ENCODE measurements at regions of chr22 and their contacts with region 1.

Region 1: DNA sequence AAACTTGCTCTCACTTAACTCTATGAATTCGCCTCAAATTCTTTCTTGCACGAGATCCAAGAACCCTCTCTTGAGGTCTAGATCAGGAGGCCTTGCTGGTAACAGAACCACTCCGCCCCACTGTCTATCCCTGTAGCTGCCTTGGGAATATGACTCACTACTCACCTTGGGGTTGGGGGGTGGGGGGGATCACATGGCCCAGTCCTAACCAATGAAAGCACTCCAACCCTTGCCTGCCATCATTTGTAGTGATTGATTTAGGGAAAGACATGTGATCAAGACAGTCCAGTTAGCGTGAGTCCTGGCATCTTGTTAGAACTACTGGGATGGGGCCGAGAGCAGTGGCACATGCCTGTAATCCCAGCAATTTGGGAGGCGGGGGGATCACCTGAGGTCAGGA is 4.8 kb upstream of the MRTFA start:
- DNase-seq: no peak
- H3K4me3 ChIP-seq: no peak overlapping the region
- H3K27ac ChIP-seq: no peak overlapping the region
- H3K4me1 ChIP-seq: peaks cover 0 to 22% (median 15%) of the 10 kb centered on the region in 6 donors
- H3K27me3 ChIP-seq: no peaks in the 10 kb centered on the region
- CTCF ChIP-seq: no peak
- POLR2A ChIP-seq: no peak

Region 2: GRCh38 chr22:40400159-40400558 is 241.1 kb before region 1 on chr22:
- intact Hi-C with region 1: no loop called
- DNase-seq: peak; percentile 93
- H3K4me3 ChIP-seq: peak overlapping the region in 1 of 8 donors; percentile 43
- H3K27ac ChIP-seq: peak overlapping the region; percentile 8 to 93 (median 86)
- H3K4me1 ChIP-seq: peaks cover 52 to 93% (median 77%) of the 10 kb centered on the region in 6 donors
- H3K27me3 ChIP-seq: no peaks in the 10 kb centered on the region
- CTCF ChIP-seq: no peak
- POLR2A ChIP-seq: no peak

Region 3: GRCh38 chr22:40436505-40437451 is 204.5 kb before region 1 on chr22:
- intact Hi-C with region 1: loop called (anchors 5 kb)
- DNase-seq: no peak
- H3K4me3 ChIP-seq: peak overlapping the region in 4 of 8 donors; percentile 11 to 45 (median 20)
- H3K27ac ChIP-seq: peak overlapping the region; percentile 58 to 81 (median 76)
- H3K4me1 ChIP-seq: peaks cover 37 to 100% (median 88%) of the 10 kb centered on the region in 6 donors
- H3K27me3 ChIP-seq: no peaks in the 10 kb centered on the region
- CTCF ChIP-seq: peak; percentile 26 to 80 (median 66)
- POLR2A ChIP-seq: no peak

Region 4: DNA sequence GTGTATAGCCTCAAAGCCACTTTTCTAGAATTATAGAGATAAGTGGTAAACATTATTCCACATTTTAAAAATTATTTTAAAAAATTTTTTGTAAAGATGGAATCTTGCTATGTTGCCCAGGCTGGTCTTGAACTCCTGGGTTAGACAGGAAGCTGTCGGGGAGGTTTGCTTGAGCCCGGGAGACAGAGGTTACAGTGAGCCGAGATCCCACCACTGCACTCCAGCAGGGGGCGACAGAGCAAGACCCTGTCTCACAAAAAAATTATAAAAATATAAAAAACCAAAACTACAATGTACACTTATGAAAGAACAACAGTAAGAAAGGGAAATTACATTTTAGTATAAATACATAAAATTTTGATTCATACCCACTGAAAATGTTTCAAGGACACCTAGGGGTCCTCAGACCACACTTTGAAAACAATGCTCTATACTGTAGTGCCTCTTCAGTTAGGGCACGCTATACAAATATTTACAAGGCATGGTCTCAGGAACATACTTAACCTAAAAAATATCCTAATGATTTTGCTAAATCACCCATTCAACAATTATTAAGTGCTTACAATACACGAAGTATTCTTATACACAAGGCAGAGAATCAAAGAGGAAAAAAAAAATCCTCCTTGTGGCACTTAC is 115.9 kb before region 1 on chr22:
- intact Hi-C with region 1: loop called (anchors 5 kb)
- DNase-seq: peak; percentile 85
- H3K4me3 ChIP-seq: no peak overlapping the region
- H3K27ac ChIP-seq: no peak overlapping the region
- H3K4me1 ChIP-seq: peaks cover 0 to 43% (median 16%) of the 10 kb centered on the region in 6 donors
- H3K27me3 ChIP-seq: no peaks in the 10 kb centered on the region
- CTCF ChIP-seq: peak; percentile 51 to 89 (median 71)
- POLR2A ChIP-seq: no peak

Region 5: DNA sequence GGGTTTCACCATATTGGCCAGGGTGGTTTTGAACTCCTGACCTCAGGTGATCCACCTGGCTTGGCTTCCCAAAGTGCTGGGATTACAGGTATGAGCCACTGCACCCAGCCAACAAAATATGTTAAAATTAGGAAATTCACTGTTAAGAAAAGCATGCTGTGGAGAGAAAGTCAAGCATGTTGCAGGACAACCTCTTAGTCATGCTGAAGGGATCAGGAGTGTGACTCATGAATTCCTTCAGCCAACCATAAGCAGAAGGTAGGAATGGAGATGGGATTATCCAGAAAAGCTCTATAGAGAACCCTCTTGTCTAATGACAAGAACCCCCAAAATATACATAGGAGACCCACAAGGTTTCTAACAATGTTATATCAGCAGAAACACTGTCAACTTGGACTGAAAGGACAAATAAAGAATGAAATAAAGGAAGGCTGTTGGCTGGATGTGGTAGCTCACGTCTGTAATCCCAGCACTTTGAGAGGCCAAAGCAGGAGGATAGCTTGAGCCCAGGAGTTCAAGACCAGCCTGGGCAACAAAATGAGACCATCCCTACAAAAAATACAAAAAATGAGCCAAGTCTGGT is 20.7 kb before region 1 on chr22:
- intact Hi-C with region 1: no loop called
- DNase-seq: no peak
- H3K4me3 ChIP-seq: no peak overlapping the region
- H3K27ac ChIP-seq: peak overlapping the region in 3 of 8 donors; percentile 29 to 51 (median 51)
- H3K4me1 ChIP-seq: peaks cover 0 to 42% (median 5%) of the 10 kb centered on the region in 6 donors
- H3K27me3 ChIP-seq: no peaks in the 10 kb centered on the region
- CTCF ChIP-seq: no peak
- POLR2A ChIP-seq: no peak